SK-N-SH (cell line): ENCODE measurements at regions of chr7 and their contacts with region 1.

Region 1: DNA sequence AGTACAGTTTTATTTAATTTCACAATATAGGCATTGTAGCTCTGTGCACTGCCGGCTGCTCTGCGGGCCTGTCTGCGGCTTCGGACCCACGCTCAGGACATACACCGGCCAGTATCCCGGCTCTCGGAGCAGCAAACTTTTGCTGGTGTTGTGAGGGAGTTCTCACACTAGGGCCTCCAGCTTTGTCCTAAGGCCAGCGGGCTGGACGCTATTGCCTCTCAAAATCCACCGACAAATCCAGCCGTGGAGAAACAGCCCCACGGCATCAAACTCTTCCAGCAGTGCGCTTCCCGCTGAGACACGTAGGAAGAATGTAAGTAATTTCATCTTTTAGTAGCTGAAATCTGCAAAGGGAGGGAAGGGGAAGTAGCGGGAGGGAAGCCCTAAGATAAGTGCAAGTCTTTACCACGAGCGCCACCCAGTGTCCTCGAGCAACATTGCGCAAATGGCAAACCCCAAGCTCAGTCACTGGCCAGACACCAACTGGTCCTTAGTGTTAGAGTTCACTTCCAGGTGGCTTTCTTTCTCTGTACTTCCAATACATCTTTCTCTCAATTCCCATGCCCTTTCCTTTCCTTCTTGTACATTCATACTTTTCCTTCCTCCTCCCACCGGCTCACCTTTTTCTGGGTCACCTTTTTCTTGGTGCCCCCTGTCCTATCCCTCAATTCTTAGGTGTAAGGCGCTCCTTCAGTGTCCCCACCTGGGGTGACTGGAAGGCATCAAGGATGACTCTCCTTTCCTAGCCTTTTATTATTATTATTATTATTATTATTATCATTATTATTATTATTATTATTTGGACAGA is 3.0 kb upstream of the DLX5 start:
- DNase-seq: peak; percentile 89
- H3K4me3 ChIP-seq: peak overlapping the region; percentile 16 to 38; a peak in 3 of 4 replicates
- H3K27ac ChIP-seq: no peak overlapping the region
- H3K4me1 ChIP-seq: peaks cover 0 to 12% of the 10 kb centered on the region in 2 experiments; a peak in 1 of 4 replicates
- H3K27me3 ChIP-seq: peaks cover 22% of the 10 kb centered on the region
- CTCF ChIP-seq: peak; percentile 99
- EP300 ChIP-seq: no peak
- RAD21 ChIP-seq: peak; percentile 100

Region 2: DNA sequence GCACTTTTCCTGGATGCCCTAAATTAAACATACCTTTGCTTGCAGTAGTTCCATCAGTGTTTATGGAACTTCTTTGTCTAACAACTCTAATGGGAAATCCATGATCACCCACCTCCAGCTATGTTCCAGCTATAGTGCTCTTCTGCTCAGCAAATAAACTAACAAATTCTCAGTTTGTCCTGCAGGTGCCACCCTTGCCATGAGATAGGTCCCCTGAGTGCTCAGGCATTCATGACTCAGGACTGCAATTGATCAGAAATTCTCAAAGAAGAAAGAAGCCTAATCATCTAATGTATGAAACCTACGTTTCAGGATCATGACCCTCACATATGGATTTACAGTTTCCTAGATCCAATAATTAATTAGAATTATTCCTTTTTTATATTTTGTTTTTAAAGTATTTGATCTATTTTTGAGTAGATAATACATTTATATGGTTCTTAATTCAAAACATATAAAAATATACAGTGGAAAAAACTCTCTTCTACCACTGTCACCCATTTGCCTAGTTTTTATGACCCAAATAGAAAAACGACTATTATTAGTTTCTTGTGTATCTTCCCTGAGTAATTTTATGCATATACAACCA is 1303.9 kb before region 1 on chr7:
- CTCF ChIA-PET with region 1: interaction called, 23 read pairs
- POLR2A ChIA-PET with region 1: no interaction called
- DNase-seq: peak; percentile 72
- H3K4me3 ChIP-seq: no peak overlapping the region
- H3K27ac ChIP-seq: no peak overlapping the region
- H3K4me1 ChIP-seq: no peaks in the 10 kb centered on the region
- H3K27me3 ChIP-seq: no peaks in the 10 kb centered on the region; the same call in 1 of the 2 replicates
- CTCF ChIP-seq: peak; percentile 59
- EP300 ChIP-seq: no peak
- RAD21 ChIP-seq: peak; percentile 96

Region 3: DNA sequence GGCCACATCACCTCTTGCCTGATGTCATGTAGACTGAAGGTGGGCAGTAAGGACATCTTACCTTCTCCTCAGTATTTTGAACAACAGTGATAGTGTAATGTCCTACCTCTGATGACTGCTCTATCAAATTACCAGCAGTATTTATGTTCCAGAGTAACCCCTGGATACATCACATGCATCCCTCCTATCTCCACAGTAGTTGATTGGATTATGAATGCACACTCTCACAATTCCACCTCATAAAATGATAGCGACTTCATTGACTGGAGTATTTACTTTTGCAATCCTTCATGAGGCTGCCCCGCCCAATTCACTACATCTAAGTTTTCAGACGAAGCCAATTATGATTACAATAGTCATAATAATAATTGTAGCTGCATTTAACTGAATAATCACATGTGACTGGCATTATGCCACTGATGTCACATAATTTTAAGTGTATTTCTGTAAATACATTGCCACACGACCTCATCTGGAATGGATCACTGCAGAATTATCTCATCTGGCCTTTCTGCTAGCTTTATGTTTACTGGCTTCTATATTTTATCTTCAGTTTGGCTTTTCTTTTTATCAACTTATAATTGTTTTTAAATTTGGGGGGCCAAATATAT is 974.7 kb before region 1 on chr7:
- CTCF ChIA-PET with region 1: interaction called, 12 read pairs
- POLR2A ChIA-PET with region 1: no interaction called
- DNase-seq: peak; percentile 59
- H3K4me3 ChIP-seq: no peak overlapping the region
- H3K27ac ChIP-seq: peak overlapping the region in 1 of 2 experiments; percentile 48; a peak in 2 of 4 replicates
- H3K4me1 ChIP-seq: peaks cover 0 to 10% of the 10 kb centered on the region in 2 experiments; a peak in 2 of 4 replicates
- H3K27me3 ChIP-seq: no peaks in the 10 kb centered on the region
- CTCF ChIP-seq: no peak
- EP300 ChIP-seq: peak in 1 of 2 experiments; percentile 36; a peak in 1 of 4 replicates
- RAD21 ChIP-seq: no peak

Region 4: GRCh38 chr7:96084881-96085551 is 942.6 kb before region 1 on chr7:
- CTCF ChIA-PET with region 1: interaction called, 14 read pairs
- POLR2A ChIA-PET with region 1: no interaction called
- DNase-seq: no peak
- H3K4me3 ChIP-seq: no peak overlapping the region
- H3K27ac ChIP-seq: no peak overlapping the region
- H3K4me1 ChIP-seq: peaks cover 2 to 12% of the 10 kb centered on the region in 2 experiments; a peak in 3 of 4 replicates
- H3K27me3 ChIP-seq: no peaks in the 10 kb centered on the region
- CTCF ChIP-seq: no peak
- EP300 ChIP-seq: peak in 1 of 2 experiments; percentile 70; a peak in 1 of 4 replicates
- RAD21 ChIP-seq: no peak

Region 5: GRCh38 chr7:96414931-96415292 is 612.7 kb before region 1 on chr7:
- CTCF ChIA-PET with region 1: interaction called, 130 read pairs
- POLR2A ChIA-PET with region 1: no interaction called
- DNase-seq: peak; percentile 51
- H3K4me3 ChIP-seq: no peak overlapping the region
- H3K27ac ChIP-seq: no peak overlapping the region
- H3K4me1 ChIP-seq: peaks cover 0 to 12% of the 10 kb centered on the region in 2 experiments; a peak in 2 of 4 replicates
- H3K27me3 ChIP-seq: no peaks in the 10 kb centered on the region
- CTCF ChIP-seq: peak; percentile 63
- EP300 ChIP-seq: no peak
- RAD21 ChIP-seq: peak; percentile 96

Region 6: GRCh38 chr7:97016381-97017191 is 11.0 kb before region 1 on chr7:
- CTCF ChIA-PET with region 1: interaction called, 78 read pairs
- POLR2A ChIA-PET with region 1: no interaction called
- DNase-seq: peak; percentile 89
- H3K4me3 ChIP-seq: peak overlapping the region; percentile 38 to 53
- H3K27ac ChIP-seq: no peak overlapping the region
- H3K4me1 ChIP-seq: peaks cover 0 to 8% of the 10 kb centered on the region in 2 experiments; a peak in 3 of 4 replicates
- H3K27me3 ChIP-seq: peaks cover 27% of the 10 kb centered on the region
- CTCF ChIP-seq: no peak
- EP300 ChIP-seq: no peak
- RAD21 ChIP-seq: no peak

Region 7: GRCh38 chr7:97342512-97342911 is 314.9 kb after region 1 on chr7:
- CTCF ChIA-PET with region 1: no interaction called
- POLR2A ChIA-PET with region 1: no interaction called
- DNase-seq: no peak
- H3K4me3 ChIP-seq: no peak overlapping the region
- H3K27ac ChIP-seq: no peak overlapping the region
- H3K4me1 ChIP-seq: no peaks in the 10 kb centered on the region
- H3K27me3 ChIP-seq: peaks cover 3% of the 10 kb centered on the region; the same call in 1 of the 2 replicates
- CTCF ChIP-seq: no peak
- EP300 ChIP-seq: no peak
- RAD21 ChIP-seq: no peak